ENCODE measurements at regions of chr1 and their contacts with region 1.

Region 1: DNA sequence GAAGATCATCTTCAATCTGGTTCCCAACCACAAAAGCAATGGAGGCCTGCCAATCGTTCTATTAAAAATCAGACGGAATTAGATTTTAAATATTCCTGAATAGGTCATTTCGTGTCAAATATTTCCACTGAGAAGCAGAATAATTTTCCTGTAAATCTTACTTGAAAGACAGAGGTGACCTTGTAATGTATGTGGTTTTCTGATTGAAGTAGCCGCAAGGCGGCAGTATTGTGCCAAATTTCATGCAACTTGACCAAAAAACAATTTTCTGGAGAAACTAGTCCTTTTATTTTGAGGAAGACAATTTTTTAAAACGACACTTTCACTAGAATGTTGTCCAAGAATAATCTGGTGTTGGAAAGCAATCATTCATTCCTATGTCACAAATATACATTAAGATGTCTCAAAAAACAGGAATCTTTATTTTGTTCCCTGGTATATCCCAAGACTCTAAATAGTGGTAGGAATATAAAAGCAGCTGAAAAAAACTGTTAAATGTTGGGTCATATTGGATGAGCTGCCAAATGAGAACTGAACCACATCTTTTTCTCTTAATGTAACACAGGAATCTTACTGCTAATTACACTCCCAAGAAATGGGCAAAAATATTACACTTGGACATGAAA is 33.6 kb downstream of the SPAG17 start:
- DNase-seq: peak; percentile 34
- H3K4me3 ChIP-seq: no peak overlapping the region
- H3K27ac ChIP-seq: no peak overlapping the region
- H3K4me1 ChIP-seq: no peaks in the 10 kb centered on the region
- H3K27me3 ChIP-seq: no peaks in the 10 kb centered on the region
- CTCF ChIP-seq: peak; percentile 11 to 70 (median 57)
- POLR2A ChIP-seq: no peak

Region 2: DNA sequence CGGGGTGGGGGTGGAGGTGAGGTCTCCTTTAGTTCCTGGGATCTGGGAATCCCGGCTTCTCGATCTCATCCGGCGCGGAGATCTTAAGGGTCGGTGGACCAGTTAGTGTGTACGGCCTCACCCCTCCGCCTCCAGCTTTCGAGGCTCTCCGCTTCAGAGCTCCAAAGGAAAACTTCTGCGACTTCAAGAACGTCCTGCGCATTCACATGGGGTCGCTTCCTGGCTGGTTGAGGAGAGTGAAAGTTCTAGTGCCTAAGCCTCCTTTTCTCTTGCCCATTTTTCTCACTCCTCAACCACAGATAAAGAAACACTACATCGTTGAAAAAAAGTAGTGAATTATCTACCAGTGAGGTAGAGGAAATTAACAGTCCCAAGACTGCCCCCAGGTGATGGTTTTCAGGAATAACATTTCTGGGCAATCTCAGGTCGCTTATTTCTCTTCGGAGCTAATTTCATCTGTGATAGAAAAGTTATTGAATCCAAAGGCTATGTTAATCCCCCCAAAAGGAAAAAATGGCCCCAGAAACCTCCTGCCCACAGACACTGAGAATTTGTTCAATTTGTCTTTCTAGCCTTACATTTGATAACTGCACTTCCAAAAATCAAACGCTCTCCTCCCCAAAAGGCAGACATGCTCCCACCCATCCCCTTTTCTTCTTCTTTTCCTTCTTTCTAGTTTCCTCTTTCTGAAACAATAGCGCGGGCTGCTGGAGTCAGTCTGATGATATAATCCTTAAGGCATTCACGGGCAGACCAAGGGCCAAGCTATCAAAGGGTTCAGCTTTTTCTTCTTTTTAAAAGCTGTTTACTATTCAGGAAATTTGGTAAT is 857.3 kb after region 1 on chr1:
- intact Hi-C with region 1: loop called (anchors 5 kb)
- DNase-seq: no peak
- H3K4me3 ChIP-seq: peak overlapping the region in 1 of 2 donors; percentile 10
- H3K27ac ChIP-seq: no peak overlapping the region
- H3K4me1 ChIP-seq: peaks cover 3% of the 10 kb centered on the region
- H3K27me3 ChIP-seq: peaks cover 20% of the 10 kb centered on the region
- CTCF ChIP-seq: peak in 3 of 4 experiments; percentile 37 to 54 (median 46)
- POLR2A ChIP-seq: no peak

Measured in prostate gland (tissue), 2 donors.